Endothelial cell of umbilical vein (primary cell): ENCODE measurements at regions of chr16 and their contacts with region 1.

Region 1: DNA sequence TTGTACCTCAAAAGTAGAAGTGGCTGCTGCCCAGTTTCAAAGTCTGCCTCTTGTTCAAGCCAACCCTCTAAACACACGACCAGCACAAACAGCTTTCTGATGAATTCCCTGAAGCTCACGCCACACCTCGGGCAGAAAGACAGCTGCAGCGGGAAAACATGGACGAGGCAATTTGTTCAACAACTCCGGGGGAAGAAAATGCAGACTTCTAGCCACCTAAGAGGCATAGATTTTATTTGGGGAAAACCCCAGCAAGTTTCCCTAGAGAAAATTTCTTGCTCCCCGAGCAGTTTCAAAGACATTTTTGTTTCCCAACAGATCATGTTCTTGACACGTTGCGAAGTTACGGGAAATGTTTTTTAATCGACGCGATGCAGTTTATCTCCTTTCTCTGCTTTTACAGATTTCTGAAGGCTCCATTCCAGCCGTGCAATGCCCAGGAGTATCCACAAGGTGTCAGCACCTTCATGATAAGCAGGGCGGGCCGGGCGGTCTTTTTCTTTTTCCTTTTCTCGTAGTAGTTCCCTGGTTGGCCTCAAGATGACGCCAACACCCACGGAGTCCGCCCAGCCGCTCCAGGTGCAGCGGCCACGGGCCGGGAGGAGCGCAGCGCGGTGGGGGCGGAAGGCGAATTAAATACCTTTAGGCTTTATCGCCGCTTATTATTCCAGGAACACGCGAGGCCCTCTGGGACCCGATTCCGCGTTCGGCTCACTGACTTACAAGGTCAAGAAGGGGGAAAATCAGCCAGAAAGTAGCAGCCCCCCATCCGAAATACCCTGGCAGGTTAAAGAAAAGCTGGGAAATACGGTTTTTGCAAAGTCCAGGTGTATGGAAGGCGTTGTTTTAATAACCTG is 2.9 kb upstream of the FOXC2 start:
- DNase-seq: peak; percentile 92
- H3K4me3 ChIP-seq: peak overlapping the region; percentile 28 to 99 (median 39)
- H3K27ac ChIP-seq: peak overlapping the region; percentile 78
- H3K4me1 ChIP-seq: peaks cover 18% of the 10 kb centered on the region
- H3K27me3 ChIP-seq: no peaks in the 10 kb centered on the region
- CTCF ChIP-seq: peak; percentile 99 to 100
- POLR2A ChIP-seq: no peak

Region 2: DNA sequence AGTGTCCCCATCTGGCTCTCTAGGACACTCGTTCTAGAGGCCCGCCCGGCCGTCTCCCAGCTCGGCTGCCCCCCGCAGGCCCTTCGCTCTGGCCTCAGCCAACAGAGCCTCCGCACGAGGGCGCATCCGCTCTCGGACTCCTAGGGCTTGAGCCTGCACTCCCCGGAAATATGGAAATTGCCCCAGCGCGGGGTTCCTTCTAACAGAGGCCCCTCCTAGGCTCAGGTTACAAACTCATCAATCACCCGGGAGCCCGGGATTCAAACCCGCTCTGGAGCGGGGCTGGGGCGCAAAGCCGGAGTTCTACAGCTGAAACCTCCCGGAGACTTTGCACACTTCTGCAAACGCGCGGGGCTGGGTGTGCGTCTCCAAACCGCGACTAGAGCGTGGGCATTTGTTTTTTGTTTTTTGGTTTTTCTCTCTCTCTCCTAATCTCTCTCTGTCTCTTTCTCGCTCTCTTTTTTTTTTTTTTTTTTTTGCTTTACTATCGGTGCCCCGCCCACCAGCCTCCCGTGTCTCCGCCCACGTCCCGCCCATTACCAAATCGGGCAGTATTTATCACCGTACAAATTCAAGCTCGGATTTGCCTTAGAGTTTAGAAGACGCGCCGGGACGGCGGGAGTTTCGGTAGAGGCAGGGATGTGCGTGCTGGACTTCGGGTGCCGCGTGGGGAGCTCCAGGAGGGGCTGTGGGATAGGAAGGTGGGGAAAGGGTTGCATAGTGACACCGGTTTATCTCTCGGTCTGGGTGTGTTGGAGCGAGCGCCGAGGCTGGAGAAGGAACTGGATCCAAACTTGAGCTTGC is 12.2 kb after region 1 on chr16:
- CTCF ChIA-PET with region 1: interaction called, 16 read pairs
- POLR2A ChIA-PET with region 1: interaction called, 3 read pairs
- dilution Hi-C with region 1: no loop called
- intact Hi-C with region 1: no loop called
- DNase-seq: peak; percentile 92
- H3K4me3 ChIP-seq: peak overlapping the region; percentile 33 to 67 (median 62)
- H3K27ac ChIP-seq: peak overlapping the region; percentile 82
- H3K4me1 ChIP-seq: peaks cover 56% of the 10 kb centered on the region
- H3K27me3 ChIP-seq: no peaks in the 10 kb centered on the region
- CTCF ChIP-seq: peak; percentile 73 to 74
- POLR2A ChIP-seq: peak; percentile 83

Region 3: DNA sequence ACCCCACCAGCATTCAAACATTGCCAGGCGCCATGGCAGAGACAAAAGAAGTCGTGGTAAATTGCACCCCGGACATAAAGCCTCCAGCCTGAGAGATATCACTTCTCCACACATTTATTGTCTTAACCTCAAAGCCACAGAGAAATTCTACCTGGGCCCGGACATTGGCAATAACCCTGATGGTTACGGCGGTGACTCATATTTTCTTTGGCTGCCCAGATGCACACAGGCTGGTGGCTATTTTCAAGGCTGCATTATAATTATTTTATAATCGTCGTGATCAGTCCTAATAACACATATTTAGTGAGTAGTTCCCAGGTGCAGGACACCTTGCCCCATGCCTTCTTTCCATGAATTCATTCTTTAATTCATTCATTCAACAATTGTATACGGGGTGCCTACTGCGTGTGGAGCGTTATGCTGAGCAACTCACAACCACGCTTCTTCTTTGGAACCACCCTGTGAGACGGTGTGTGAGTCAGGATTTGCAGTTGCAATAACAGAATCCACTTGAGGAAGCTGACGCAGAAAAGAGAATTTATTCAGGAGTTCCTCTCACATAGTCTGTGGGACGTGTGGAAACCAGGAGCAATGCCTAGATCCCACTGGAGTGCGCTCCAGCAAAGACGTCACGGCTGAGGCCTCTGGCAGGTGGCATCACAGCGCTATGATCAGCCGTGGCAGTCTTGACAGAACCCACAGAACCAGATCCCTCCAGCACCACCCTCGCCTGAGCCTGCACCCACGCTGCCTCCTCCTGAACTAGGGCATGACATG is 260.4 kb after region 1 on chr16:
- CTCF ChIA-PET with region 1: no interaction called
- POLR2A ChIA-PET with region 1: no interaction called
- dilution Hi-C with region 1: no loop called
- intact Hi-C with region 1: loop called (anchors 1 kb)
- DNase-seq: peak; percentile 87
- H3K4me3 ChIP-seq: peak overlapping the region in 1 of 3 experiments; percentile 7
- H3K27ac ChIP-seq: peak overlapping the region; percentile 93
- H3K4me1 ChIP-seq: peaks cover 50% of the 10 kb centered on the region
- H3K27me3 ChIP-seq: no peaks in the 10 kb centered on the region
- CTCF ChIP-seq: no peak
- POLR2A ChIP-seq: peak; percentile 50

Region 4: GRCh38 chr16:87017365-87018012 is 453.8 kb after region 1 on chr16:
- CTCF ChIA-PET with region 1: interaction called, 42 read pairs
- POLR2A ChIA-PET with region 1: no interaction called
- dilution Hi-C with region 1: no loop called
- intact Hi-C with region 1: loop called (anchors 1 kb)
- DNase-seq: peak; percentile 88
- H3K4me3 ChIP-seq: peak overlapping the region in 1 of 3 experiments; percentile 8
- H3K27ac ChIP-seq: peak overlapping the region; percentile 21
- H3K4me1 ChIP-seq: peaks cover 15% of the 10 kb centered on the region
- H3K27me3 ChIP-seq: no peaks in the 10 kb centered on the region
- CTCF ChIP-seq: peak; percentile 50 to 52
- POLR2A ChIP-seq: no peak

Region 5: GRCh38 chr16:87203060-87203656 is 639.4 kb after region 1 on chr16:
- CTCF ChIA-PET with region 1: interaction called, 9 read pairs
- POLR2A ChIA-PET with region 1: no interaction called
- dilution Hi-C with region 1: no loop called
- intact Hi-C with region 1: loop called (anchors 1 kb)
- DNase-seq: peak; percentile 77
- H3K4me3 ChIP-seq: no peak overlapping the region
- H3K27ac ChIP-seq: no peak overlapping the region
- H3K4me1 ChIP-seq: no peaks in the 10 kb centered on the region
- H3K27me3 ChIP-seq: peaks cover 0 to 9% of the 10 kb centered on the region in 2 experiments
- CTCF ChIP-seq: peak; percentile 97 to 98
- POLR2A ChIP-seq: no peak

Region 6: GRCh38 chr16:87297918-87298631 is 734.4 kb after region 1 on chr16:
- CTCF ChIA-PET with region 1: interaction called, 55 read pairs
- POLR2A ChIA-PET with region 1: no interaction called
- dilution Hi-C with region 1: no loop called
- intact Hi-C with region 1: loop called (anchors 1 kb)
- DNase-seq: peak; percentile 44
- H3K4me3 ChIP-seq: no peak overlapping the region
- H3K27ac ChIP-seq: no peak overlapping the region
- H3K4me1 ChIP-seq: no peaks in the 10 kb centered on the region
- H3K27me3 ChIP-seq: no peaks in the 10 kb centered on the region
- CTCF ChIP-seq: peak; percentile 53 to 77
- POLR2A ChIP-seq: no peak